CD8-positive, alpha-beta T cell (primary cell): ENCODE measurements at regions of chr3 and their contacts with region 1.

Region 1: DNA sequence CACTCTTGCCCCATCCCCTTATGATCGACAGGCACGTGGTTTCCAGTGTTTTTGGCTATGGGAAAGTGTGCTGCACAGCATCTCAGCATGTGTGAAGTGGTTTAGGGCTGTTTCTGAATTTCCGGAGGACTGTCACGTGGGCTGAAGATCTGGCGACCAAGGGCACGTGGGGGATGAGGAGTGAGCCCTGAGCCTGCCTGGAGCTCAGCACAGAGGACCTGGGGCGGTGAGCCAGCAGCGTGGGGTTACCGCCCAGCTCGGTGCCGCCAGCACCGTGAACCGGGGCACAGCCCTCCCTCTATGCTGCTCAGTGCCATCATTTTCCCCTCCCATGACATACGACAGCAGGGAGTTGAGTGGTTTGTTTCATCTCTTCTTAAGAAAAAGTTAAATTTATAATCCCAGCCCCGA is 150.2 kb downstream of the DNAJB8 start:
- DNase-seq: peak; percentile 21 to 89 (median 70)
- ATAC-seq: peak; percentile 97
- H3K4me3 ChIP-seq: peak overlapping the region in 1 of 2 experiments; percentile 6
- H3K4me3 Mint-ChIP-seq: peak overlapping the region; percentile 36
- H3K27ac ChIP-seq: peak overlapping the region; percentile 50 to 68
- H3K27ac Mint-ChIP-seq: peak overlapping the region; percentile 87
- H3K4me1 ChIP-seq: peaks cover 86% of the 10 kb centered on the region
- H3K4me1 Mint-ChIP-seq: peaks cover 86% of the 10 kb centered on the region
- H3K27me3 ChIP-seq: no peaks in the 10 kb centered on the region
- H3K27me3 Mint-ChIP-seq: no peaks in the 10 kb centered on the region
- CTCF ChIP-seq: no peak

Region 2: GRCh38 chr3:128278761-128279600 is 37.5 kb before region 1 on chr3:
- CTCF ChIA-PET with region 1: interaction called, 6 read pairs
- POLR2A ChIA-PET with region 1: no interaction called
- intact Hi-C with region 1: loop called in 1 of 2 experiments (anchors 5 kb)
- DNase-seq: peak in 1 of 9 experiments; percentile 41
- ATAC-seq: no peak
- H3K4me3 ChIP-seq: no peak overlapping the region
- H3K4me3 Mint-ChIP-seq: no peak overlapping the region
- H3K27ac ChIP-seq: no peak overlapping the region
- H3K27ac Mint-ChIP-seq: no peak overlapping the region
- H3K4me1 ChIP-seq: peaks cover 5% of the 10 kb centered on the region
- H3K4me1 Mint-ChIP-seq: peaks cover 20% of the 10 kb centered on the region
- H3K27me3 ChIP-seq: no peaks in the 10 kb centered on the region
- H3K27me3 Mint-ChIP-seq: no peaks in the 10 kb centered on the region
- CTCF ChIP-seq: no peak

Region 3: GRCh38 chr3:128297401-128298138 is 18.9 kb before region 1 on chr3:
- CTCF ChIA-PET with region 1: interaction called, 13 read pairs
- POLR2A ChIA-PET with region 1: interaction called, 6 read pairs
- intact Hi-C with region 1: loop called in 1 of 2 experiments (anchors 1 kb)
- DNase-seq: peak in 2 of 9 experiments; percentile 8 to 47
- ATAC-seq: no peak
- H3K4me3 ChIP-seq: no peak overlapping the region
- H3K4me3 Mint-ChIP-seq: peak overlapping the region; percentile 3
- H3K27ac ChIP-seq: no peak overlapping the region
- H3K27ac Mint-ChIP-seq: no peak overlapping the region
- H3K4me1 ChIP-seq: peaks cover 50% of the 10 kb centered on the region
- H3K4me1 Mint-ChIP-seq: peaks cover 73% of the 10 kb centered on the region
- H3K27me3 ChIP-seq: no peaks in the 10 kb centered on the region
- H3K27me3 Mint-ChIP-seq: no peaks in the 10 kb centered on the region
- CTCF ChIP-seq: no peak